Naive thymus-derived CD4-positive, alpha-beta T cell (primary cell): ENCODE measurements at regions of chrX and their contacts with region 1.

Region 1: GRCh38 chrX:65034668-65035445 is 58.6 kb upstream of the ZC4H2 start:
- DNase-seq: peak; percentile 63 to 84 (median 78)
- ATAC-seq: peak; percentile 94
- H3K4me3 ChIP-seq: peak within 1 kb of the TSS; percentile 78
- H3K4me3 Mint-ChIP-seq: peak within 1 kb of the TSS; percentile 87 to 98 (median 94)
- H3K27ac ChIP-seq: peak within 1 kb of the TSS; percentile 76
- H3K27ac Mint-ChIP-seq: peak within 1 kb of the TSS; percentile 90 to 98 (median 96)
- H3K4me1 ChIP-seq: no peaks in the 10 kb centered on the region
- H3K4me1 Mint-ChIP-seq: peaks cover 4 to 64% (median 51%) of the 10 kb centered on the region in 7 donors
- H3K27me3 ChIP-seq: no peaks in the 10 kb centered on the region
- H3K27me3 Mint-ChIP-seq: no peaks in the 10 kb centered on the region

Region 2: GRCh38 chrX:63350941-63351616 is 1683.8 kb before region 1 on chrX and contains the start of gene SPIN4:
- CTCF ChIA-PET with region 1: no interaction called
- POLR2A ChIA-PET with region 1: no interaction called
- intact Hi-C with region 1: loop called in 1 of 2 experiments (anchors 10 kb)
- DNase-seq: peak; percentile 9 to 68 (median 18)
- ATAC-seq: peak; percentile 92
- H3K4me3 ChIP-seq: peak within 1 kb of the TSS; percentile 72
- H3K4me3 Mint-ChIP-seq: peak within 1 kb of the TSS; percentile 83 to 98 (median 89)
- H3K27ac ChIP-seq: peak within 1 kb of the TSS; percentile 48
- H3K27ac Mint-ChIP-seq: peak within 1 kb of the TSS in 8 of 9 donors; percentile 70 to 84 (median 81)
- H3K4me1 ChIP-seq: peaks cover 0 to 3% of the 10 kb centered on the region in 2 donors
- H3K4me1 Mint-ChIP-seq: peaks cover 4 to 35% (median 23%) of the 10 kb centered on the region in 7 donors
- H3K27me3 ChIP-seq: no peaks in the 10 kb centered on the region
- H3K27me3 Mint-ChIP-seq: no peaks in the 10 kb centered on the region
- total RNA-seq, gene SPIN4: 0.95 to 6.8 (median 1.9) TPM

Region 3: DNA sequence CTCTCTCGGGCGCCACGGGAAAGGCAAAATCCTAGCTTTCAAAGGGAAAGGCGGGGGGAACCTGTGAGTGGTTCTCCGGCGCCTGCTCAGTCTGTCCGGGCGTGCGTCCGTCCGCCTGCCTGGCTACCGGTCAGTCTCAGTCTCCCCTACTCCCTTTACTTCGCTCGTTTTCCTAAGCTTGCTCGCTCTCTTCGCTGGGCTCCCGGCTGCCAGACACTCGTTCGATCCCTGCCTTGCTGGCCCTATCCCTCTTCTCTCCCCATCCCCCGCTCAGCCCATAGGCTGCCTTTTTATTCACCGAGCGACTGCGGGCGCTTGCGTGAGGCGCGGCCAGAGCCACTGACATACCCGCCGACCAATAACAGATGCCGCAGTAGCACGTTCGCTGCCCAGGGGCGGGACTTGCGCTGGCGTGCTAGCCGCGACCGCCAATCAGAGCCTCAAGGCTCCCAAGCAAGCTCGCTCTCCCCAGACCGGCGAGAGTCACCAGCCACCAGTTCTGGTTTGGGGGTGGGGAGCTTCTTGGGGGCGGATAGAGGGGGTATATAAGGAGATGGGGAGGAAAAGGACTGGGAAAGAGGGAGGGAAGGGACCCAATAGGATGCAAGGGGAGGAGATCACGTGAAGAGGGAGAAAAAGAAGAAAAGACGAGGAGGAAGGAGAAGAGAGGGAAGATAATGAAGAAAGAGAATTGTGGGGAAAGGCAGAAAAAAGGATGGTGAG is 1279.8 kb before region 1 on chrX:
- CTCF ChIA-PET with region 1: no interaction called
- POLR2A ChIA-PET with region 1: interaction called, 3 read pairs
- intact Hi-C with region 1: loop called in 1 of 2 experiments (anchors 10 kb)
- DNase-seq: peak; percentile 60 to 89 (median 86)
- ATAC-seq: peak; percentile 97
- H3K4me3 ChIP-seq: peak overlapping the region; percentile 91
- H3K4me3 Mint-ChIP-seq: peak overlapping the region; percentile 96 to 99 (median 98)
- H3K27ac ChIP-seq: peak overlapping the region; percentile 83
- H3K27ac Mint-ChIP-seq: peak overlapping the region; percentile 93 to 99 (median 97)
- H3K4me1 ChIP-seq: peaks cover 0 to 4% of the 10 kb centered on the region in 2 donors
- H3K4me1 Mint-ChIP-seq: peaks cover 11 to 43% (median 30%) of the 10 kb centered on the region in 7 donors
- H3K27me3 ChIP-seq: no peaks in the 10 kb centered on the region
- H3K27me3 Mint-ChIP-seq: no peaks in the 10 kb centered on the region

Region 4: GRCh38 chrX:64394874-64395567 is 639.8 kb before region 1 on chrX and contains the start of gene MTMR8:
- CTCF ChIA-PET with region 1: no interaction called
- POLR2A ChIA-PET with region 1: interaction called, 9 read pairs
- intact Hi-C with region 1: loop called (anchors 1 to 2 kb)
- DNase-seq: peak; percentile 58 to 83 (median 78)
- ATAC-seq: peak; percentile 94
- H3K4me3 ChIP-seq: peak within 1 kb of the TSS; percentile 66
- H3K4me3 Mint-ChIP-seq: peak within 1 kb of the TSS; percentile 89 to 98 (median 94)
- H3K27ac ChIP-seq: peak within 1 kb of the TSS; percentile 66
- H3K27ac Mint-ChIP-seq: peak within 1 kb of the TSS; percentile 83 to 94 (median 91)
- H3K4me1 ChIP-seq: no peaks in the 10 kb centered on the region
- H3K4me1 Mint-ChIP-seq: peaks cover 15 to 54% (median 45%) of the 10 kb centered on the region in 7 donors
- H3K27me3 ChIP-seq: no peaks in the 10 kb centered on the region
- H3K27me3 Mint-ChIP-seq: no peaks in the 10 kb centered on the region
- total RNA-seq, gene MTMR8: 4.7 to 9.4 (median 7.2) TPM

Region 5: GRCh38 chrX:64975989-64976672 is 58.7 kb before region 1 on chrX and contains the start of gene ZC4H2:
- CTCF ChIA-PET with region 1: no interaction called
- POLR2A ChIA-PET with region 1: interaction called, 25 read pairs
- intact Hi-C with region 1: loop called (anchors 1 kb)
- DNase-seq: peak; percentile 17 to 73 (median 58)
- ATAC-seq: peak; percentile 96
- H3K4me3 ChIP-seq: peak within 1 kb of the TSS; percentile 62
- H3K4me3 Mint-ChIP-seq: peak within 1 kb of the TSS; percentile 87 to 99 (median 96)
- H3K27ac ChIP-seq: peak within 1 kb of the TSS; percentile 60
- H3K27ac Mint-ChIP-seq: peak within 1 kb of the TSS; percentile 58 to 92 (median 88)
- H3K4me1 ChIP-seq: peaks cover 3 to 11% of the 10 kb centered on the region in 2 donors
- H3K4me1 Mint-ChIP-seq: peaks cover 2 to 37% (median 28%) of the 10 kb centered on the region in 7 donors
- H3K27me3 ChIP-seq: no peaks in the 10 kb centered on the region
- H3K27me3 Mint-ChIP-seq: no peaks in the 10 kb centered on the region
- total RNA-seq, gene ZC4H2: 11.5 to 22.9 (median 12.9) TPM

Region 6: DNA sequence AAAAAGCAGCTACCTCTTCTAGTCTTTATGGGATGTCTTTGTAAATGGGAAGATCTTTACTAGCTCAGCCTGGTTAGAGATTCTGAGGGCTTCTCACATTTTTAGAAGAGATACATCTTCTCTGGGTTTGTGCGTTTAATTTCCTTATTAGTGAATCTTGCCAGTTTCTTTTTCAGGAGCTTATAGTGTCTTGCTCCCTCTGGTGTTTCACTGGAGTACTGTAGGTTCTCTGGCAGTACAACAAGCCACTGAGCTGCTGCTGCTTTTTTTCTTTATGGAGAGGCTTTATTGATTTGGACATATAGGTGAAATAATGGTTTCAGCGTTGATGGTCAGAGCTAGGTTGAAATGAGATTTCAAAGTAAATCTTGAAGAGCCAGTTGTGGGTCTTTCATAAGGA is 416.8 kb after region 1 on chrX:
- CTCF ChIA-PET with region 1: interaction called, 5 read pairs
- POLR2A ChIA-PET with region 1: no interaction called
- intact Hi-C with region 1: loop called in 1 of 2 experiments (anchors 5 kb)
- DNase-seq: peak in 6 of 9 donors; percentile 4 to 40 (median 35)
- ATAC-seq: no peak
- H3K4me3 ChIP-seq: no peak overlapping the region
- H3K4me3 Mint-ChIP-seq: no peak overlapping the region
- H3K27ac ChIP-seq: no peak overlapping the region
- H3K27ac Mint-ChIP-seq: peak overlapping the region in 2 of 9 donors; percentile 18 to 44
- H3K4me1 ChIP-seq: no peaks in the 10 kb centered on the region
- H3K4me1 Mint-ChIP-seq: peaks cover 0 to 8% (median 3%) of the 10 kb centered on the region in 7 donors
- H3K27me3 ChIP-seq: no peaks in the 10 kb centered on the region
- H3K27me3 Mint-ChIP-seq: no peaks in the 10 kb centered on the region

Region 7: GRCh38 chrX:66728818-66729271 is 1694.0 kb after region 1 on chrX:
- CTCF ChIA-PET with region 1: interaction called, 3 read pairs
- POLR2A ChIA-PET with region 1: no interaction called
- intact Hi-C with region 1: loop called in 1 of 2 experiments (anchors 5 kb)
- DNase-seq: peak; percentile 25 to 75 (median 68)
- ATAC-seq: peak; percentile 91
- H3K4me3 ChIP-seq: peak overlapping the region; percentile 82
- H3K4me3 Mint-ChIP-seq: peak overlapping the region; percentile 70 to 96 (median 92)
- H3K27ac ChIP-seq: peak overlapping the region; percentile 67
- H3K27ac Mint-ChIP-seq: peak overlapping the region; percentile 85 to 100 (median 97)
- H3K4me1 ChIP-seq: no peaks in the 10 kb centered on the region
- H3K4me1 Mint-ChIP-seq: peaks cover 0 to 8% (median 0%) of the 10 kb centered on the region in 7 donors
- H3K27me3 ChIP-seq: no peaks in the 10 kb centered on the region
- H3K27me3 Mint-ChIP-seq: no peaks in the 10 kb centered on the region